CD4-positive, alpha-beta memory T cell (primary cell): ENCODE measurements at regions of chrX and their contacts with region 1.

Region 1: GRCh38 chrX:30889147-30890140 is at the start of gene TAB3:
- DNase-seq: peak; percentile 91 to 97 (median 95)
- H3K4me3 ChIP-seq: peak within 1 kb of the TSS; percentile 57 to 65
- H3K4me3 Mint-ChIP-seq: peak within 1 kb of the TSS; percentile 87 to 94 (median 92)
- H3K27ac ChIP-seq: peak within 1 kb of the TSS; percentile 75
- H3K27ac Mint-ChIP-seq: peak within 1 kb of the TSS; percentile 85 to 98 (median 93)
- H3K4me1 ChIP-seq: peaks cover 38% of the 10 kb centered on the region
- H3K4me1 Mint-ChIP-seq: peaks cover 13 to 51% (median 34%) of the 10 kb centered on the region in 4 donors
- H3K27me3 ChIP-seq: no peaks in the 10 kb centered on the region
- H3K27me3 Mint-ChIP-seq: no peaks in the 10 kb centered on the region
- total RNA-seq, gene TAB3: 21.0 to 23.8 TPM

Region 2: DNA sequence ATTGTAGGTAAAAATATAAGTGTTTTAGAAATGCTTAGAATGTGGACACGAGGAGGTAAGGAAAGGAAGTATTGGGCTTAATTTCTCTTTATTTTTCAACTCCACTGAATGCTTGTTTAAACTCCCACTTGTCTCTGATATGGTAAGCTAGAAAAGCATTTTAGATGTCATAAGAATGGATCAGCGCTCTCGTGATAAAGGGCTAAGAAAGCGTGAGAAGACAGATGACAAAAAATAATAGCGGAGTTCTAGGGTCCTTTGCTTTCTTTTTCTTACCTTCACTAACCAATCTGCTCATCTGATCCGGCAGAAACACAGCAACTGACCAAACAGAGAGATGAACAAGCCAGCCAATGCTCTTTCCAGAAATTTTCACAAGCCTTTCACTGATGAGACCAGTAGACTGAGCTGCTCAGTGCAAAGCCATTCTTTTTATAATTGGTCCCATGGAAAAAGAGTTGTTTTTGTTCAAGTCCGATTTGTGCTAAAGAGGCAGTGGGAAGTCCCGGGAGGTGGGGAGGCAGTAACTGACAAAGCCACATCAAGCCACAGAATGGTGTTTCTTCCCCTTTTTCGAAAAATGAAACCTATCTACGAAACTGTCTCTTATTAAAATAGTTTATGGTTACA is 312.0 kb before region 1 on chrX and contains the start of gene TASL:
- CTCF ChIA-PET with region 1: no interaction called
- POLR2A ChIA-PET with region 1: no interaction called
- intact Hi-C with region 1: loop called (anchors 2 kb)
- DNase-seq: peak; percentile 27 to 54 (median 43)
- H3K4me3 ChIP-seq: peak within 1 kb of the TSS in 1 of 2 donors; percentile 61
- H3K4me3 Mint-ChIP-seq: peak within 1 kb of the TSS; percentile 79 to 93 (median 86)
- H3K27ac ChIP-seq: peak within 1 kb of the TSS; percentile 53
- H3K27ac Mint-ChIP-seq: peak within 1 kb of the TSS; percentile 75 to 91 (median 90)
- H3K4me1 ChIP-seq: peaks cover 5% of the 10 kb centered on the region
- H3K4me1 Mint-ChIP-seq: peaks cover 5 to 22% (median 11%) of the 10 kb centered on the region in 4 donors
- H3K27me3 ChIP-seq: no peaks in the 10 kb centered on the region
- H3K27me3 Mint-ChIP-seq: no peaks in the 10 kb centered on the region
- total RNA-seq, gene TASL: 2.8 to 3.0 TPM

Region 3: DNA sequence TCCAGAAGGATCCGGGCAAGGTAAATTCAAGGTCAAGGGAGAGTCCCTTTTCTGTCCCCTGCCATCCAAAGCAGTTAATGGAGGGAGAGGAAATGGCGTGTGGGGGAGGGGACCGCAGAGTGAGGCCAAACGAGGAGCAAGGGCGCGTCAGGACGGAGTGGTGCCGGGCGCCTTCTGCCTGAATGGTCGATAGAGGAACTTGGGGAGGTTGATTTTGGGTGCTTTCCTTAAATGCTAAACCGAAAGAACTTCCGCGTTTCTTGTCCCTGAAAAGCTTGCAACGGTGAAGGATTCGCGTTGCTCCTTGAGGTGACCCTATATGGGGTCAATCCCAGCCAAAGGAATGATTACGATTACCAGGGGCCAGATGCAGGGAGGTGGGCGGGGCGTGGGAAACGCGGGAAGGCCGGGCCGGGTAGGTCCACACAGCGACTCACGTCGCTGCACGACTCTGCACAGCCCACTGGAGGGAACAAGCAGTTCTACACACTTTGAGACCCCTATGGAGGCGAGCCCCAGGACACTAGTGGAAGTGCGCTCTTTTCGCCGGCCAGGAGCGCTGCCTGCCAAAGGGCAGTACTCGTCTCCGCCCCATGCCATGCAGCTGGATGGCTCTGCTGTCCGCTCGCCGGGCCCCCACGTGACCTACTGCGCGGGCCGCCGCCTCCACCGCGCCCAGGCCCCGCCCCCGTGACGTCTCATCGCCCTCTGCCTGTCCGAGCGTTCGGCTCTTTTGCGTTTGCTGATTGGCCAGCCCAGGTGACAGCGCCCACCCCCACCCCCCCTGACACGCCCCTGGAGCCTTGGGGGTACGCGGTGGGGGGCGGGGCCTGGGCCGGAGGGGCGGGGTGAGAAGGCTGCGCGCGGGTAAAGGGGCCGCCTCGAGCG is 236.7 kb before region 1 on chrX:
- CTCF ChIA-PET with region 1: no interaction called
- POLR2A ChIA-PET with region 1: no interaction called
- intact Hi-C with region 1: loop called (anchors 1 kb)
- DNase-seq: peak; percentile 87 to 90 (median 89)
- H3K4me3 ChIP-seq: peak overlapping the region; percentile 89 to 90
- H3K4me3 Mint-ChIP-seq: peak overlapping the region; percentile 84 to 97 (median 92)
- H3K27ac ChIP-seq: peak overlapping the region; percentile 74
- H3K27ac Mint-ChIP-seq: peak overlapping the region; percentile 72 to 97 (median 95)
- H3K4me1 ChIP-seq: peaks cover 35% of the 10 kb centered on the region
- H3K4me1 Mint-ChIP-seq: peaks cover 19 to 52% (median 27%) of the 10 kb centered on the region in 4 donors
- H3K27me3 ChIP-seq: no peaks in the 10 kb centered on the region
- H3K27me3 Mint-ChIP-seq: no peaks in the 10 kb centered on the region

Region 4: GRCh38 chrX:30735839-30736238 is 153.6 kb before region 1 on chrX:
- CTCF ChIA-PET with region 1: no interaction called
- POLR2A ChIA-PET with region 1: no interaction called
- intact Hi-C with region 1: loop called (anchors 10 kb)
- DNase-seq: peak; percentile 58 to 66 (median 60)
- H3K4me3 ChIP-seq: no peak overlapping the region
- H3K4me3 Mint-ChIP-seq: peak overlapping the region in 2 of 8 donors; percentile 23 to 26
- H3K27ac ChIP-seq: no peak overlapping the region
- H3K27ac Mint-ChIP-seq: no peak overlapping the region
- H3K4me1 ChIP-seq: no peaks in the 10 kb centered on the region
- H3K4me1 Mint-ChIP-seq: peaks cover 0 to 5% (median 3%) of the 10 kb centered on the region in 4 donors
- H3K27me3 ChIP-seq: no peaks in the 10 kb centered on the region
- H3K27me3 Mint-ChIP-seq: no peaks in the 10 kb centered on the region

Region 5: DNA sequence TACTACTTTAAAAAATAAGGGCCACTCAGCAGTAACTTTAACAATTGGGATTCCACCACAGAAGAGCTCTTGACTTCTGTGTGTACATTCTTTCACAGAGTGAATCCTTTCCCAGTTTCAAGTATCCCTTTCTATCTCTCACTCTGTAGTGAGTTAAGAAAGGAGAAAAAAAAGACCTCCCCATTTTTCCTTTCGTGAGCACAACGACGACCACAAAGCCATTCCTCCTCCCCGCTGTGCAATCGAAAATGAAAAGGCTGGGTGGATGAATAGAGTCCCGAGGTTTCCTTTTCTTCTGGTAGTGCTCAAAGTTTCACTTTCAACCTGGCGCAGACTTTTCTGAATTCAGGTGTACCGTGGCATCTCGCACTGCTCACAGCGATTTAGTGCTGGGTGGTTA is 58.4 kb before region 1 on chrX:
- CTCF ChIA-PET with region 1: no interaction called
- POLR2A ChIA-PET with region 1: interaction called, 3 read pairs
- intact Hi-C with region 1: loop called (anchors 2 kb)
- DNase-seq: peak; percentile 16 to 30 (median 19)
- H3K4me3 ChIP-seq: no peak overlapping the region
- H3K4me3 Mint-ChIP-seq: peak overlapping the region; percentile 76 to 91 (median 77)
- H3K27ac ChIP-seq: peak overlapping the region; percentile 15
- H3K27ac Mint-ChIP-seq: peak overlapping the region; percentile 80 to 94 (median 93)
- H3K4me1 ChIP-seq: peaks cover 5% of the 10 kb centered on the region
- H3K4me1 Mint-ChIP-seq: peaks cover 14 to 35% (median 18%) of the 10 kb centered on the region in 4 donors
- H3K27me3 ChIP-seq: no peaks in the 10 kb centered on the region
- H3K27me3 Mint-ChIP-seq: no peaks in the 10 kb centered on the region